PC-9 (cell line): ENCODE measurements at regions of chr1 and their contacts with region 1.

Region 1: DNA sequence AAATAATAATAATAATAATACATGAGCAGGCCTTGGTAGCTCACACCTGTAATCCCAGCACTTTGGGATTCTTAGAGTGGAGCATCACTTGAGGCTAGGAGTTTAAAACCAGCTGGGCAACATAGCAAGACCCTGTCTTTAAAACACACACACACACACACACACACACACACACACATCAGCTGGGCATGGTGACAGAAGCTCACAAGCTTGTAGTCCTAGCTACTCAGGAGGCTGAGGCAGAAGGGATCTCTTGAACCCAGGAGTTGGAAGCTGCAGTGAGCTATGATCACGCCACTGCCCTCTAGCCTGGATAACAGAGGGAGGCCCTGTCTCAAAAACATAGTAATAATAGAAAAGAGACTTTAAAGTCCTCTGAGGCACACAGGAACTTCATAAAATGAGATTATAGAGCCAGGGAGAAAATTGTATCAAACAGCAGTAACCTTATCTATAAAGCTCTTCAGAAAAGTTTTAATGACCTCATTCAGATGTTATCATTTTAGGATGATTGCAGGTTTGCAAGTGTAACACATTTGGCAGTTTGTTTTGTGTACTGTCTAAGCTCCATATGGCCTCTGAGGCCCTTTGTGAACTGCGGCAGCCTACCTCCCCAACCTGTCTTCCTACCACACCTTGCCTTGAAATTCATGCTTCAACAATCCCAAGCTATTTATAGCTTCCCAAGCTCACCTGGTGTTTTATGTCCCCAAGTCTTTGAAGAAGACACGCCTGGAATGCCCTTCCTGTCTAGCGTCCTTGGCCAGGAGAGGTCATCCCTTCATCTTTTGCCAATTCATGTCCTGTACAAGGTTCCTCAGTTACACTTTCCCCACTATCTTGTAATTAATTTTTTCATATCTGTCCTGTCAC is 8.4 kb upstream of the AKNAD1 start:
- DNase-seq: peak; percentile 31 to 94
- H3K4me3 ChIP-seq: no peak overlapping the region
- H3K27ac ChIP-seq: peak overlapping the region; percentile 30; the same call in 1 of the 2 replicates
- H3K4me1 ChIP-seq: peaks cover 16% of the 10 kb centered on the region
- H3K27me3 ChIP-seq: no peaks in the 10 kb centered on the region
- CTCF ChIP-seq: no peak

Region 2: DNA sequence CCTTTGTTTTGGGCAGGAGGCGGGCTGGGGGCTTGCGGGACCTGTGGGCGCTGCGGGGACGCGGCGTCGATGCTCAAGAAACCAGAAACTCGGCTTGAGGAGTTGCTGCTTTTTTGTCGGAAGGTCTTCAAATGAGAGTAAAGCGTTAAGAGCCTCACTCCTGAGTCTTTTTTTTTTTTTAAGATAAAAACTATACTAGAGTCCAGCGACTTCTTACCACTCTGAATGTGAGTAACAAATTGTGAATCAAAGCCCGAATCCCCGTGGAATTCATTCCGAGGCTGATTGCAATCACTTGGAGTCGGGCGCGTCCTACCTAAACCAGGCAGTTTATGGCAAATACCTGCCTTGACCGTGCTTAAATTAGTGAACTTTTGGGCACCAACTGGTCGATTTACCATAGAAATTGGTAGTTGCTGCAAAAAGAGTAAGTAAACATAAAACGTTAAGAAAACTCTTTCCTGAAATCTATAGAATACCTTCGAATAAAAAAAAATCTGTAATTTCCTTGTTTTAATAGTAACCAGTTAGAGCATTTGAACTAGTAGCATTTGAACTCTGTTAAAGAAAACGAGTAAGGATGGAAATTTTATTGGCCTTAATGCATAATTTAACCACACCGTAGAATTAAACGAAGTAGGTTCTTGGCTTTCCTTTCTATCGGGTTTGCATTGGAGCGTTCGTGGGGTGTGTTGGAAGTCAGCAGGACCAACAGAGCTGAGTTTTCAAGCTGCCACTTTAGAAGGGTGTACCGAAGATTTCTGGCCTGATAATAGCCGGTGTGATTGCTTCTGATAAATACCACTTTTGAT is 12.3 kb after region 1 on chr1:
- CTCF ChIA-PET with region 1: no interaction called
- POLR2A ChIA-PET with region 1: interaction called, 10 read pairs
- intact Hi-C with region 1: no loop called
- DNase-seq: peak in 1 of 2 experiments; percentile 43
- H3K4me3 ChIP-seq: peak overlapping the region; percentile 82
- H3K27ac ChIP-seq: peak overlapping the region; percentile 31
- H3K4me1 ChIP-seq: peaks cover 44% of the 10 kb centered on the region
- H3K27me3 ChIP-seq: no peaks in the 10 kb centered on the region
- CTCF ChIP-seq: no peak

Region 3: GRCh38 chr1:108913105-108913948 is 48.1 kb after region 1 on chr1:
- CTCF ChIA-PET with region 1: no interaction called
- POLR2A ChIA-PET with region 1: no interaction called
- intact Hi-C with region 1: no loop called
- DNase-seq: no peak
- H3K4me3 ChIP-seq: no peak overlapping the region
- H3K27ac ChIP-seq: no peak overlapping the region
- H3K4me1 ChIP-seq: no peaks in the 10 kb centered on the region
- H3K27me3 ChIP-seq: no peaks in the 10 kb centered on the region
- CTCF ChIP-seq: no peak